ENCODE measurements at regions of chr2 and their contacts with region 1.

Region 1: DNA sequence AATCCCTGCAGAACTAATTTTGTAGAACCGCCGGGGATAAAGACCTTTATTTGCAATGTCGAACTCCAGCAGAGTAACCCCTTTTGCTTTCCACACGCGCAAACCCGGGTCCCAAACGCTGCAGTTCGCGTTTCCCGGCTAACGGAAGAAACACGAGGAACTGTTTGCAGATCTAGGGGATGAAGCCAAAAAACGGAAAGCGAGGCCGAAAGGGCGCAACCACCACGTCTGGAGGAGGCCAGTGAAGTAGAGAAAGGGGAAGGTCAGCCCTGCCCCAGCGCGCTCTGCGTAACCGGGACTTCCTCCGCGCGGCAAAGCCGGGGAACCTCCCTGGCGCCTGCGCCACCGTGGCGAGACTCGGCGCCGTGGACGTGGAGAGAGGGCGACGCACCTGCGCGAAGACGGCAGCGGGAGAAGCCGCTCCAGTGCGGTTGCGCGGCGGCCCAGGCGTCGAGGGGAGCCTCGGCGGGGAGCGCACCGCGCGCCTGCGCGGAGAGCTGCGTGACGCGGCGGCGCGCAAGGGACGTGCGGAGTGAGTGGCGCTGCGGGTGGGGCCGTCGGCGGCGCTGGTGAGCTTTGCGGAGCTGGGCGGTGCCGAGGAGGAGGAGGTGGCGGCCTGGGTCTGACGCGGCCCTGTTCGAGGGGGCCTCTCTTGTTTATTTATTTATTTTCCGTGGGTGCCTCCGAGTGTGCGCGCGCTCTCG is at the start of gene PPP1CB:
- DNase-seq: peak; percentile 87 to 94
- H3K4me3 ChIP-seq: peak within 1 kb of the TSS; percentile 90
- H3K4me1 ChIP-seq: peaks cover 26% of the 10 kb centered on the region
- H3K27me3 ChIP-seq: no peaks in the 10 kb centered on the region

Region 2: DNA sequence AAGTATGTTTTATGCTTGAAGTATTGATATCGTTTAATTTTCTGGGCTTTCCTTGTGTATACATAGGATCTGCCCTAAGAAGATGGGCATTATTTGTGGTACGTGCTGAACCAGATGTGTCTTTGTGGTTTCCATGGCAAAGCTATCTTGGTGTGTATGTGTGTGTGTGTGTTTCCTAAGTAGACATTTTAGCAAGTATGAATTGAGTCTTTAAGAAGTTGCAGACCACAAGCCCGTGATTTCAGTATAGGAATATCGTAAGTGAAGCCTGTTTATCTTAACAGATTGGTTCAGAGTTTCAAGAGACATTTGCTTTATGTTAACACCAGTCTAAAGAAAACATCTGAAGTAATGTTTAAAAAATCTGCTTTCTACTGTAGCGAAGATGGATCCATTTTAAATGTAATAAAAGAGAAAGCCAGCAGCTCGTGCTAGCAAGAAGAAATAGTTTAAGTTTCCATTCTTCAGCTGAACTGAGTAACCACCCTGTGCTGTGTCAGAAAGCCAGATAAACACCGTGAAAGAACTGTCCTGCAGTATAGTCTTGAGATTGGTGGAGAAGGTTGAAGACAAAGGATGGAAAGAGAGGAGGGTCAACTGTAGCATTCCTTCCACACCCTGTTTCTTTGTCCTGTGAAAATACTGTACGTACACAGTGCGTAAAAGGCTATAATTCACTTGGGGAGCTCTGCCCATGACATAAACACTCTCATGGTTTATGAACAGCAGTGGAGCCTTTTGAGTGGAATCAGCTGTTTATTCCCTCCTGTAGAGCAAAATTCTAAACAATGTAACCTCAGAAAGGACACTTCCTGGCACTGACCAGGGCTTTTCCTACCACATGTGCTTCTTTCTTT is 450.7 kb before region 1 on chr2:
- in situ Hi-C with region 1: no loop called
- DNase-seq: peak in 1 of 2 experiments; percentile 22
- H3K4me3 ChIP-seq: no peak overlapping the region
- H3K4me1 ChIP-seq: no peaks in the 10 kb centered on the region
- H3K27me3 ChIP-seq: no peaks in the 10 kb centered on the region

Region 3: GRCh38 chr2:28377984-28378678 is 373.3 kb before region 1 on chr2:
- in situ Hi-C with region 1: no loop called
- DNase-seq: no peak
- H3K4me3 ChIP-seq: no peak overlapping the region
- H3K4me1 ChIP-seq: no peaks in the 10 kb centered on the region
- H3K27me3 ChIP-seq: 0 out of 2 replicates have a peak, but pooled peaks cover 3% of the 10 kb centered on the region

Region 4: DNA sequence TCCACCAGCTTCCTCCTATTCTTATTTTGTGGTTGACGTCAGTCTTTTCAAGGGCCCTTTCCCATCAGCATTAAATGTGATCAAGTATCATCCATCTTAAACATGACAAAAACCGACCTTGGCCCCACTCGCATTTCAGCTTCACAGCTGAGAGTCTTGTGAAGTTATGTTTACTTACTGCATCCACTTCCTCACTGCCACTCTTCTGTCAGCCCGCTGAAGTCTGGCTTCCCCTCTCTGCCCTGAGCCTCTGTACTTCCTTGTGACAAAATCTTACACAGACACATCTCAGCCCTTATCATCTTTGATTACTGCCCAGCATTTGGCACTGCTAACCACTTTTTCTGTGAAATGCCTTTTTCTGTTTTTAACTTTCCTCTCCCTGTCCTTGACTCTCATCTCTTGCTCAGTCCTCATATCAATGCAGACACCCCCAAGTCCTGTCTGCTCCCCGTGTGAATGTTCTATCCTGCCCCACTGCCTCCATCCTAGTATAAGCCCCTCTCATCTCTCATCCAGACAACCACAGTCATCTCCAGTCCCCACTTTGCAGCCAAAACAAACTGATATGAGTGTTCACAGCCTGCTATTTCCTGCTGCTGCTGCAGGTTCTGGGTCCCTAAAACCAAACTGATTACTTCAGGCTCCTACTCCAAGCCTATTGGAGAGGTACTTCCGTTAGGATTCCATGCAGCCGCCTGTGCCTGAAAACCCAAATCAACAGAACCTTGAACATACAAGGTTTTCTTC is 327.4 kb before region 1 on chr2:
- in situ Hi-C with region 1: no loop called
- DNase-seq: no peak
- H3K4me3 ChIP-seq: no peak overlapping the region
- H3K4me1 ChIP-seq: no peaks in the 10 kb centered on the region
- H3K27me3 ChIP-seq: no peaks in the 10 kb centered on the region

Region 5: DNA sequence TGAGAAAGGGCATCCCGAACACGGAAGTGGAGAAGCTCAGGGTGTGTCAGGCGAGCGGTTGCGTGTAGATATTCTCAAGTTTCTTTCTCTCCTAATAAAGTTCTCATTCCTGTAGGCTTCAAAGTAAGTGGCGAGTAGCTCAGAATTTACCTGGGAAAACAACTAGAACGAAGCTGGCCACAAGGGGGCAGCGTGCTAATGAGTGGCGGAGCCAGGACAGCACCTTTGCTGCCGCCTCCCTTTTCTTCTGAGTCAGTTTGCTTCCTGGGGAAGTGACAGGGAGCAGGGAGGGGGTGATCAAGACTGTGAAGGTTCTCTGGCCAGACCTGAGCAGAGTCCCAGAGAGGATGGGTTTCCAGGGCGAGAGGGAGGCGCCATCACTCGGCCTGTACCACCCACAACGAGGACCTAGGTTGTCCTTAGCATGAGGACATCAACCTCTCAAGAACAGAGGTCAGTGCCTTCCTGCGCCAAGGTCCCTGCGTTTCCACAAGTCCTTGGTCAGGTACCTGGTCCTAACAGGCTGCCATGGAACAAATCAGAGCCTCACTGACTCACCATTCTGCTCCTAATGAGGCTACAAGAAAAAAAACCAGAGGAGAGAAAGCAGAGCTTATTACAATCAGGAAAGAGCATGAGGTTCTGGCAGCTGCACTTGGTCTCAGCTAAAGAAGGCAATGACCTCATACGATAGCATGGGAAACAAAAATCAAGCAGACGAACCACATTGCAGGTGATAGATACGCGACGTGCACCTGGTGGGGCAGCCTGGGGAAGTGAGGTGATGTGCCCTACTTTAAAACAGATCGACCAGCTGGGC is 156.9 kb before region 1 on chr2:
- in situ Hi-C with region 1: loop called (anchors 10 kb)
- DNase-seq: peak; percentile 80 to 93
- H3K4me3 ChIP-seq: no peak overlapping the region
- H3K4me1 ChIP-seq: peaks cover 25% of the 10 kb centered on the region
- H3K27me3 ChIP-seq: no peaks in the 10 kb centered on the region

Region 6: GRCh38 chr2:28695245-28695647 is 56.2 kb before region 1 on chr2:
- in situ Hi-C with region 1: no loop called
- DNase-seq: peak; percentile 41 to 45
- H3K4me3 ChIP-seq: no peak overlapping the region
- H3K4me1 ChIP-seq: peaks cover 8% of the 10 kb centered on the region; the same call in 1 of the 2 replicates
- H3K27me3 ChIP-seq: no peaks in the 10 kb centered on the region

Measured in HAP-1 (cell line).